ENCODE measurements at regions of chr22 and their contacts with region 1.

Region 1: DNA sequence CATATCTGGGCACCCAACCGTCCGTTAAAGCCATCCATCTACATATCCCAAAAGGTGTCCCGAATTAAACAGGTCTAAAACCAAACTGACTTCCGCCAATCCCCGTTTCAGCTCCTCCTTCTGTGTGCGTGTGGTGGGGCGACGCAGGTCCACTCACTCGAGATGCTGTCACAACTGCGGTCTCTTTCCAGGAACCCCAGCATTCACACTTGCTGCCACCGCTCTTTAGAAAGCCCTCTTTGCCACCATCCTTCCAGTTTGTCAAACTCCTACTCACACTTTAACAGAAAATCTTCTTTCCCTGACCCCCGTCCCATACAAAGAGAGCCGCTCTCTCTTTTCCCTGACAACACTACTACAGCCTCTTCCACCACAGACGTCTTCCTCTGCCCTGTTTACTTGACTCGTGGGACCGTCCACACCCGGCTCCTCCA is 467 bp downstream of the ESS2 start:
- DNase-seq: no peak
- H3K4me3 ChIP-seq: peak overlapping the region; percentile 91 to 93
- H3K27ac ChIP-seq: peak overlapping the region in 1 of 2 experiments; percentile 42; a peak in 1 of 4 replicates
- H3K4me1 ChIP-seq: peaks cover 4 to 8% of the 10 kb centered on the region in 2 experiments; a peak in 3 of 4 replicates
- H3K27me3 ChIP-seq: peaks cover 24% of the 10 kb centered on the region
- CTCF ChIP-seq: no peak
- EP300 ChIP-seq: no peak
- RAD21 ChIP-seq: no peak

Region 2: GRCh38 chr22:19070397-19071169 is 73.4 kb before region 1 on chr22:
- CTCF ChIA-PET with region 1: no interaction called
- POLR2A ChIA-PET with region 1: no interaction called
- DNase-seq: no peak
- H3K4me3 ChIP-seq: no peak overlapping the region
- H3K27ac ChIP-seq: no peak overlapping the region
- H3K4me1 ChIP-seq: peaks cover 3 to 5% of the 10 kb centered on the region in 2 experiments; a peak in 1 of 4 replicates
- H3K27me3 ChIP-seq: no peaks in the 10 kb centered on the region
- CTCF ChIP-seq: no peak
- EP300 ChIP-seq: no peak
- RAD21 ChIP-seq: no peak

Region 3: GRCh38 chr22:19109198-19110067 is 34.6 kb before region 1 on chr22:
- CTCF ChIA-PET with region 1: interaction called, 13 read pairs
- POLR2A ChIA-PET with region 1: no interaction called
- DNase-seq: no peak
- H3K4me3 ChIP-seq: no peak overlapping the region
- H3K27ac ChIP-seq: no peak overlapping the region
- H3K4me1 ChIP-seq: peaks cover 8 to 10% of the 10 kb centered on the region in 2 experiments; a peak in 2 of 4 replicates
- H3K27me3 ChIP-seq: no peaks in the 10 kb centered on the region
- CTCF ChIP-seq: no peak
- EP300 ChIP-seq: no peak
- RAD21 ChIP-seq: no peak

Region 4: GRCh38 chr22:19127329-19128008 is 16.5 kb before region 1 on chr22:
- CTCF ChIA-PET with region 1: interaction called, 14 read pairs
- POLR2A ChIA-PET with region 1: interaction called, 3 read pairs
- DNase-seq: no peak
- H3K4me3 ChIP-seq: no peak overlapping the region
- H3K27ac ChIP-seq: no peak overlapping the region
- H3K4me1 ChIP-seq: peaks cover 0 to 6% of the 10 kb centered on the region in 2 experiments; a peak in 1 of 4 replicates
- H3K27me3 ChIP-seq: no peaks in the 10 kb centered on the region
- CTCF ChIP-seq: no peak
- EP300 ChIP-seq: no peak
- RAD21 ChIP-seq: no peak

Region 5: DNA sequence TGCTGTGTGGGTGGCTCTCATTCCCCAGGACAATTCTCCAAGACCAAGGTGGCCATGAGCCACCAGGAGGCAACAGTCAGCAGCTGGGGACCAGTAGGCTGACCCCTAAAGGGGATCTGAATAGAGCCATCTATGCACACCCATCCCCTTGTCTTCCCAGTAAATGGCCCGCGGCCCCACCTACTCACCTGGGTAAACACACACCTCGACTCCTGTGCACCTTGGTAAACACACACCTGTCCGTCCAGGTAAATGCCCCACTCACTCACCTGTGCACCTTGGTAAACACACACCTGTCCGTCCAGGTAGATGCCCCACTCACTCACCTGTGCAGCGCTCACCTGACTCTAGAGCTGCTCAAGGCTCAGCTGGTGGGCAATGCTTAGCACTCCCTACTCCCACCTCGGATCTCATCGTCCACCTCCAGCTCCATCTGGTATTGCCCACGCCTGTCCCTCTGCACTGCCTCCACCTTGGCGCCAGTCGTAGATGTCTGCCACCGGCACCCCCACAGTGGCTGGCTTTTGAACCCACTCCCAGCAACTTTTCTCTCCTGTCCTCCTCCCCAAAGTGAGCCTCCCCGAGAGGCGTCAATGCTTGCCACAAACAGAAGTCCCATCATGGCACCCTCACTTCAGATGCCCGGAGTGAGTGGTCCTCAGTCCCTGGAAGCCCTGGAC is 24.4 kb after region 1 on chr22:
- CTCF ChIA-PET with region 1: interaction called, 10 read pairs
- POLR2A ChIA-PET with region 1: interaction called, 7 read pairs
- DNase-seq: no peak
- H3K4me3 ChIP-seq: no peak overlapping the region
- H3K27ac ChIP-seq: no peak overlapping the region
- H3K4me1 ChIP-seq: peaks cover 10 to 23% of the 10 kb centered on the region in 2 experiments
- H3K27me3 ChIP-seq: peaks cover 39% of the 10 kb centered on the region
- CTCF ChIP-seq: peak; percentile 13; the same call in 1 of the 2 replicates
- EP300 ChIP-seq: no peak
- RAD21 ChIP-seq: no peak